PC-9 (cell line): ENCODE measurements at regions of chr13 and their contacts with region 1.

Region 1: DNA sequence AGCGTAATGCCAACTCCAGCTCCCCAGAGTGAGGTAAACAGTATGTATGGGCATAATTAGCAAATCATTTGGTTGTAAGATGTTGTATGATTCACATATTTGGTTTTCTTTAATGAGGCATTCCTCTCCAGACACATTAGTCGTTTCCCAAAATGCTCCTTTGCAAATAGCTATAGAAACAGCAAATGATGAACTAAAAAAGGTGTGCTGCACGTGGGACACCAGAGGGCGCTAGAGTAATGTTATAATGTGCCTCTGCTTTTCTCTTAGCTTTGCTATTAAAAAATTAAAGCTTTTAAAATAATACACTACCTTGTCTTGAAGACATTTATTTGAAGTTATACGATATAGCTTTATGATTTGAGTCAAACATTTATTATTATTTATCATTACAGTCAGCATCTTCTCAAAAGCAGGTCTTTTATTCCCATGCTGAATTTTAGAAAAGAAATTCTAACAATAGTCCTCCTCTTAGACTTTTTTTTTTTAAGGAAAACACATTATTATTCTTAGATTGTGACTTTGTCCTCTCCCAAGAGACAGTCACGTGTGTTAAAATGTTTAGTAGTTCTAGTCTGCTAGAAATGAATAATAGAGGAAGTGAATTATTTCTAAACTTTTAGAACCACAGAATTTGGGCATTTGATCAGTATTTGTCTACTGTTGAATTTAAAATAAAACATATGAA is 121.6 kb upstream of the FRY start:
- DNase-seq: peak; percentile 39 to 45
- H3K4me3 ChIP-seq: no peak overlapping the region
- H3K27ac ChIP-seq: no peak overlapping the region
- H3K4me1 ChIP-seq: peaks cover 27% of the 10 kb centered on the region
- H3K27me3 ChIP-seq: no peaks in the 10 kb centered on the region
- CTCF ChIP-seq: peak; percentile 93

Region 2: GRCh38 chr13:31930901-31931522 is 21.0 kb after region 1 on chr13:
- CTCF ChIA-PET with region 1: interaction called, 29 read pairs
- POLR2A ChIA-PET with region 1: interaction called, 3 read pairs
- intact Hi-C with region 1: no loop called
- DNase-seq: peak in 1 of 2 experiments; percentile 46
- H3K4me3 ChIP-seq: no peak overlapping the region
- H3K27ac ChIP-seq: peak overlapping the region; percentile 54
- H3K4me1 ChIP-seq: peaks cover 49% of the 10 kb centered on the region
- H3K27me3 ChIP-seq: no peaks in the 10 kb centered on the region
- CTCF ChIP-seq: no peak

Region 3: DNA sequence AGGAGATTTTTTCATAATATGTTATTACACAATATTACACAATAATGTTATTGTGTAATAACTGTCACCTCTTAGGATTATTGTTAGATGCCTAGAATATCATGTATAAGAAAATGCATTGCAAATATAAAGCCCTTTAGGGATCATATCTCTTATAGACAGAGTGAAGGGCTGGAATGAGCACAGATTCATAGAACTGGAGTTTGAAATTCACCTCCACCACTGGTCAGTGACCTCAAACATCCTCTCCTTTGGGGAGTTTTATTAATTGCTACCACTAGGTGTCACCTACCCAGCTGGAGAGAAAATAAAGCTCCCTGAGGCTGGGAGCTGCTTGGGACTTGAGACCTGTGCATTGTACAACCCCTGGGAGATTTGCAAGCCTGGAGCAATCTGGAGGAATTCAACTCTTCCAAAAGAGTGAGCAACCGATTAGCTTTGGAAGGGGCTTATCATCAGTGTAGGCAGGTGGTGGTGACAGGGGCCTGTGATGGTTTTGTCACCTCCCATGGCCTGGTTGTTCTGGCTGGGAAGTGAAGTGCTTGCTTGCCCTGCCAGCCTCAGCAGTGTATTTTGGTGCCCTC is 91.3 kb after region 1 on chr13:
- CTCF ChIA-PET with region 1: interaction called, 3 read pairs
- POLR2A ChIA-PET with region 1: no interaction called
- intact Hi-C with region 1: loop called (anchors 5 kb)
- DNase-seq: peak in 1 of 2 experiments; percentile 56
- H3K4me3 ChIP-seq: no peak overlapping the region
- H3K27ac ChIP-seq: no peak overlapping the region
- H3K4me1 ChIP-seq: peaks cover 34% of the 10 kb centered on the region
- H3K27me3 ChIP-seq: no peaks in the 10 kb centered on the region
- CTCF ChIP-seq: peak; percentile 79

Region 4: DNA sequence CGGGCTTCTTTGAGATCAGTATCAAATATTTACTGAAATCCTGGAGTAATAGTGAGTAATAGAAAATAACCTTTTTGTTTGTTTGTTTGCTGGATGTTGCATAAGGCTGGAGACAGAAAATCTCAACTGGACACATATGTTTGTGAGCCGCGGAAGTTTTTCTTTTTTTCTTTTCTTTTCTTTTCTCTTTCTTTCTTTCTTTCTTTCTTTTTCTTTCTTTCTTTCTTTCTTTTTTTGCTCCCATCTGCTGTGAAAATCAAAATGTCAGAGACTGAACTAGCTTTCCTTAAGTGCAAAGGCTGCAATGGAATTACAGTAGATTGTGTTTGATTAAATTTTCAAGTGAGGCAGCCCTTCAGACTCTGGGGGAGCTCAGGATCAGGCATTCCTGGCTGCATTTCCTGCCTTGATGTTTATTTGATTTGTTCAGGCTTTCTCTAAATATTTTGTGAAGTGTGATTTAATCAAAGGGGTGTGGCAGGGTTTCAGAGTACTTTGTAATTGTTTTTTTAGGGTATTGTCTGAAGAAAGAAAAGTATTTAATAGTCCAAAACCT is 121.9 kb after region 1 on chr13:
- CTCF ChIA-PET with region 1: interaction called, 22 read pairs
- POLR2A ChIA-PET with region 1: no interaction called
- intact Hi-C with region 1: no loop called
- DNase-seq: no peak
- H3K4me3 ChIP-seq: peak overlapping the region; percentile 78
- H3K27ac ChIP-seq: no peak overlapping the region
- H3K4me1 ChIP-seq: peaks cover 30% of the 10 kb centered on the region
- H3K27me3 ChIP-seq: no peaks in the 10 kb centered on the region
- CTCF ChIP-seq: no peak

Region 5: DNA sequence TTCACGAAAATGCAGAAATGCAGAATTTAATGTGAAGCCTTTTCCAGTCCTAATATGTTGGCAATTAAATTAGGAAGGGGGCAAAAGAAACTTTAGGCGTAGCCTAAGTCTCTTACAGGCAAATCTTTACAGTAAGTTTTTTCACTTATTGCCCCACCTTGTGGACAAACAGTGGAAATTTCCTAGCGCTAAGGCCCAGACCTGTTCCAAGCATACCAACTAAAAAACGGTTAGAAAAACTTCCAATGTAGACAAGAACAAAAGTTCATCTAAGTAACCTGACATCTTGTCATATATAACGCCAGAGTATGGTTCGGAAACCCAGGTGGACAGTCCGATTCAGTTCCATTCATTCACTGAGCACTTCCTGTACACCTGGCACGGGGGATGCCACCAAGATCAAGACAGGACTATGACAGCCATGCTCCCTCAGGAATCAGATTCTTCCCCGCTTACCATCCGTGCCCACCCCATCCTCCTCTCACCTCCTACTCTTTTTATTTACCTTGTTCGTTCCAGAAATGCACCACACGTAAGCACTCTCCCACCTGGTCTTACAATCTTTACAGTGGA is 400.2 kb after region 1 on chr13:
- CTCF ChIA-PET with region 1: interaction called, 4 read pairs
- POLR2A ChIA-PET with region 1: no interaction called
- intact Hi-C with region 1: loop called (anchors 1 kb)
- DNase-seq: peak; percentile 17 to 39
- H3K4me3 ChIP-seq: no peak overlapping the region
- H3K27ac ChIP-seq: no peak overlapping the region
- H3K4me1 ChIP-seq: peaks cover 6% of the 10 kb centered on the region; the same call in 1 of the 2 replicates
- H3K27me3 ChIP-seq: no peaks in the 10 kb centered on the region
- CTCF ChIP-seq: peak; percentile 77